ENCODE measurements at regions of chr12 and their contacts with region 1.

Region 1: DNA sequence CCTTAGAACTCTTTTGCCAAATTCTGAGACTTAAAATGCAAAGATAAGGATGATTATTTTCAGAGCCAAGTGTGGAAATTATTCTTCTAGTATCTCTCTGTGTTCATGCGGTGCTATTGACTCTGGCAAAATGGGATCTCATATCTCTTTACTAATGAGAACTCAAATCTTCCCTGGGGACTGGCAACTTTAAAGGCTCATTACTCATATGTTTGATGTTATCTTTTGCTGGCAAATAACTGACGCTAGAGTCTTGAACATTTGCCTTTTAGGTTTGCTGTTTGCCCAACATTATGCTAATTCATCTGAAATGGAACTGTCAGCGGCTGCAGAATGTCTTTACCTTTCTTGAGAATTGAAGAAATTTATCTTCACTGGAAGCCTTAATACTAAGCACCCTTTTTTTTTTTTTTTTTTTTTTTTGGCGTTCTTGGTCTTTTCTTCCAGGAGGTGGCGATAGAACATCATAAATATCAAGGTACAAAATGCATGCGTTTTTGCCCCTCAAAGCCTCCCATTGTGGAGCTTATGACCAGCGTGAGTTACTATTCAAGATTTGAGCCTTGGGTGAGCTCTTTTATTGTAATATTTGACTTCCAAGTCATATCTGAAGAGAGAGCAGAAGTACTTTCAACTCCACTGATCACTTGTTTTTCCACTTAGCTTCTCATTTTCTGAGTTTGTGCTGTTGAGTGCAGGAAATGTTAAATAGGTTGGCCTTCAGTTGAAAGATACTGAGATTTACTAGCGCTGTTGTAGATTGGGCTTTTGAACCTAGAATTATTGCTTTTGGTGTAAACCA is 86.6 kb downstream of the CAND1 start:
- DNase-seq: no peak

Region 2: GRCh38 chr12:67441736-67442346 is 86.1 kb after region 1 on chr12:
- intact Hi-C with region 1: loop called (anchors 5 kb)
- DNase-seq: peak; percentile 90

Region 3: GRCh38 chr12:67524861-67525616 is 169.3 kb after region 1 on chr12:
- intact Hi-C with region 1: no loop called
- DNase-seq: no peak

Region 4: GRCh38 chr12:67943226-67943892 is 587.6 kb after region 1 on chr12:
- intact Hi-C with region 1: loop called (anchors 10 kb)
- DNase-seq: no peak

Region 5: GRCh38 chr12:68223083-68223747 is 867.4 kb after region 1 on chr12:
- intact Hi-C with region 1: loop called (anchors 5 kb)
- DNase-seq: peak; percentile 82

Measured in cardiac septum (tissue), 1 donor.